Activated CD4-positive, alpha-beta T cell treated with anti-CD3 and anti-CD28 coated beads for 36 hours (primary cell): ENCODE measurements at regions of chr12 and their contacts with region 1.

Region 1: DNA sequence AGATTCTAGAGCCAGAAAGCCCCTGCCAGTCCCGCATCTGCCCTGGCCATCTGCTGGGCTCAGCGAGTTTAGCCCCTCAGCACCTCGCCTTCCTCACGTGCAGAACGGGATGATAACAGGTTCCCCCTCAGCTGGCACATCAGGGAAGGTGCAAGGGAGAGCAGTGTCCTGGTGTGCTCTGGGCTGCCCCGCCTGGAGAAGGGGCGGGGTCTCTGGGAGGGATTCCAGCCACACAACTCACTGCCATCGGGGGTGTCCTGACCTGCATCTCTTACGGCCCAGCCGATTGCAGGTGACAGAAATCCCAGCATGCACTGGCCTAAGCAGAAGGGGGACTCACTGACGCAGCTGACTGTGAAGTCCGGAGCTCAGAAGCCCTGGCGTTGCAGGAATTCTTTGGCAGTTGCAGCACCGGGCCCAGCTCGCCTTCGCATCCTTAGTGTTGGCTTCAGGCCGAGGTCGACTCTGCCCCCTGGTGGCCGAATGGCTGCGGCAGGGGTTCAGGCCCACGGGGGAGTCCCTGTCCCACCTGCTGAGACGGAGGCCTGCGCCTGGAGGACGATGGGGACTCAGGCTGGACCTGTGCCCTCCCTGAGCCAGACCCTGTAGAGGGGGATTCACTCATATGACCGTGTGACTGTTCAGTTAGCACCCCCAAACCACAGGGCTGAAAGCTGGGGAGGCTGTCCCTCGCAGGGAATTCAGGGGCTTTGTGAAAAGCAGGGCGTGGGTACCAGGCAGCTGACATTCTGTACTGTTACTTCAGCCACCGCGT is 178.6 kb downstream of the ADGRD1 start:
- DNase-seq: peak; percentile 89
- ATAC-seq: peak; percentile 92
- H3K4me3 Mint-ChIP-seq: no peak overlapping the region
- H3K27ac Mint-ChIP-seq: no peak overlapping the region
- H3K4me1 Mint-ChIP-seq: no peaks in the 10 kb centered on the region
- H3K27me3 Mint-ChIP-seq: no peaks in the 10 kb centered on the region

Region 2: GRCh38 chr12:130761537-130762318 is 370.6 kb before region 1 on chr12:
- CTCF ChIA-PET with region 1: interaction called, 5 read pairs
- POLR2A ChIA-PET with region 1: no interaction called
- intact Hi-C with region 1: loop called (anchors 1 kb)
- DNase-seq: peak; percentile 84
- ATAC-seq: peak; percentile 68
- H3K4me3 Mint-ChIP-seq: peak overlapping the region; percentile 39
- H3K27ac Mint-ChIP-seq: no peak overlapping the region
- H3K4me1 Mint-ChIP-seq: peaks cover 4% of the 10 kb centered on the region
- H3K27me3 Mint-ChIP-seq: peaks cover 11% of the 10 kb centered on the region

Region 3: GRCh38 chr12:130826149-130826801 is 306.0 kb before region 1 on chr12:
- CTCF ChIA-PET with region 1: interaction called, 5 read pairs
- POLR2A ChIA-PET with region 1: no interaction called
- intact Hi-C with region 1: loop called in 1 of 2 experiments (anchors 2 kb)
- DNase-seq: peak; percentile 88
- ATAC-seq: peak; percentile 97
- H3K4me3 Mint-ChIP-seq: no peak overlapping the region
- H3K27ac Mint-ChIP-seq: no peak overlapping the region
- H3K4me1 Mint-ChIP-seq: peaks cover 11% of the 10 kb centered on the region
- H3K27me3 Mint-ChIP-seq: no peaks in the 10 kb centered on the region

Region 4: DNA sequence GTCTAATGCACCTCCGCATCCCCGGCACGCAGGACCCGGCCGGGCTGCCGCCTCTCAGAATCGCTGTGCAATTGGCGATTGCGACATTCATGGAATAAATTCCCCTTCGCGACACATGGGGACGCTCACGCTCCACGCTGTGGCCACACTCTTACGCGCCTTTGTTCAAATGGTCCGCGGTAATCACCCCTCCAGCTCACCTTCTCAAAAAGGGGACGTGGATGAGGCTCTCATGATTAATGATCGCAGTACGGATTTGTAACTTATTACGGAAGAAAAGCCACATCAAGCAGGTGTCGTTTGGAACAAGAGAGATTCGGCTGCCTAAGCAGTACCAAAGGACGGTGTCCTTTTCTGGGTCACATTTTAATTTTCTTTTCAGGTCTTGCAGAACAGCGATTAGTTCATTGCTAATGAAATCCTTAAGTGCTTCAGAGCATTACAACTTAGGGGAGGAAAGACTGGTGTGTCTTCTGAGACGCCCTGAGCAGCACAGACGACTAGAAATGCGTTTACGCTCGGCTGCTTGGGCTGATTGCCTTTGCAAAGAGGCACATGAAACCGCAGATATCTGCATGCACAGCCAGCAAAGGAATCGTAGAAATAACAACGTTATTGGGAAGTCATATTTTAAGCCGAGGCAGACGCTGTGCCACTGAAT is 215.9 kb before region 1 on chr12:
- CTCF ChIA-PET with region 1: interaction called, 5 read pairs
- POLR2A ChIA-PET with region 1: no interaction called
- intact Hi-C with region 1: loop called (anchors 1 to 10 kb)
- DNase-seq: peak; percentile 58
- ATAC-seq: peak; percentile 73
- H3K4me3 Mint-ChIP-seq: no peak overlapping the region
- H3K27ac Mint-ChIP-seq: no peak overlapping the region
- H3K4me1 Mint-ChIP-seq: no peaks in the 10 kb centered on the region
- H3K27me3 Mint-ChIP-seq: peaks cover 48% of the 10 kb centered on the region

Region 5: GRCh38 chr12:131092901-131093603 is 39.3 kb before region 1 on chr12:
- CTCF ChIA-PET with region 1: interaction called, 11 read pairs
- POLR2A ChIA-PET with region 1: no interaction called
- intact Hi-C with region 1: loop called in 1 of 2 experiments (anchors 5 kb)
- DNase-seq: peak; percentile 70
- ATAC-seq: peak; percentile 70
- H3K4me3 Mint-ChIP-seq: peak overlapping the region; percentile 45
- H3K27ac Mint-ChIP-seq: peak overlapping the region; percentile 59
- H3K4me1 Mint-ChIP-seq: peaks cover 21% of the 10 kb centered on the region
- H3K27me3 Mint-ChIP-seq: peaks cover 3% of the 10 kb centered on the region

Region 6: GRCh38 chr12:131116391-131117117 is 15.8 kb before region 1 on chr12:
- CTCF ChIA-PET with region 1: interaction called, 18 read pairs
- POLR2A ChIA-PET with region 1: no interaction called
- intact Hi-C with region 1: no loop called
- DNase-seq: peak; percentile 16
- ATAC-seq: no peak
- H3K4me3 Mint-ChIP-seq: no peak overlapping the region
- H3K27ac Mint-ChIP-seq: no peak overlapping the region
- H3K4me1 Mint-ChIP-seq: peaks cover 12% of the 10 kb centered on the region
- H3K27me3 Mint-ChIP-seq: peaks cover 4% of the 10 kb centered on the region